ENCODE measurements at regions of chr9 and their contacts with region 1.

Region 1: GRCh38 chr9:136482793-136483588 is at the start of gene SEC16A:
- DNase-seq: peak; percentile 81
- ATAC-seq: peak; percentile 79
- H3K4me3 ChIP-seq: peak within 1 kb of the TSS; percentile 92
- H3K27ac ChIP-seq: peak within 1 kb of the TSS; percentile 99
- H3K4me1 ChIP-seq: peaks cover 6% of the 10 kb centered on the region; the same call in 1 of the 2 replicates
- H3K27me3 ChIP-seq: no peaks in the 10 kb centered on the region
- CTCF ChIP-seq: no peak
- EP300 ChIP-seq: no peak
- POLR2A ChIP-seq: peak; percentile 97
- RAD21 ChIP-seq: no peak
- polyA plus RNA-seq, gene SEC16A: 12.4 to 16.6 TPM

Region 2: DNA sequence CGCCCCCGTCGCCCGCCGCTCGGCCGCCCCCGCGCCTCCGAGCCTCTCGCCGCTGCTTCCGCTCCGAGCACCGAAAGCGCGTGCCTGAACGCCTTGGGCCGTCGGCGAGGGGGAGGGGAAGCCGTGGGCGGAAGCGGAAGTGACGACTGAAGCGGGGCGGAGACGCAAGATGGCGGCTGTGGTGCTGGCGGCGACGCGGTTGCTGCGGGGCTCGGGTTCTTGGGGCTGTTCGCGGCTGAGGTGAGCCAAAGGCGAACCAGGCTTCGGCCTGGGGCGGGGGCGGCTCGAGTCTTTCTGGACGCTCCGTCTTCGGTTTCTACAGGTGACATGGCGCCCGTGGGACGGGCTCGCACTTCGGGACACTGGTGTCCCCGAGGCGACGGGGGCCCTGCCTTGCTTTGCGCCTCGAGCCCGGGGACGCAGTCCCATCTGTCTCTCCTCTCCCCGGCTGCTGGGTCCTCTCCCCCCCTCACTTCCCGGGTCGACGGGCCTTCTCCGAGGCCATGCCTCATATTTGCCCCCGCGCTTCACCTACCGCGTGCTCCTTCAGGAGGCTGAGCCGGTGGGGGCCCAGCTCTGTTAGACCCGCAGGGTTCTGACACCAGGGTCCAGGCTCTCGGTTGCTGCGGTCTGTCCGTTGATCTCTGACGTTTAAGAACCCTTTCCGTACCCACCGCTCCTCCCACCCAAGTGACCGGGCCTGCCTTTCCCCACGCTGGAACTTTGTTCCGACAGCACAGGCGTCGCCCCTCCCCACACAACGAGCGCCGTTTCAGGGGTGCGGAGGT is 72.3 kb before region 1 on chr9 and contains the starts of genes ENTR1 and PMPCA:
- CTCF ChIA-PET with region 1: interaction called, 3 read pairs
- POLR2A ChIA-PET with region 1: no interaction called
- RAD21 ChIA-PET with region 1: no interaction called
- SMC1A ChIA-PET with region 1: no interaction called
- in situ Hi-C with region 1: no loop called
- intact Hi-C with region 1: loop called (anchors 2 kb)
- DNase-seq: peak; percentile 66
- ATAC-seq: peak; percentile 78
- H3K4me3 ChIP-seq: peak within 1 kb of the TSS; percentile 96
- H3K27ac ChIP-seq: peak within 1 kb of the TSS; percentile 93
- H3K4me1 ChIP-seq: peaks cover 16% of the 10 kb centered on the region
- H3K27me3 ChIP-seq: no peaks in the 10 kb centered on the region
- CTCF ChIP-seq: no peak
- EP300 ChIP-seq: no peak
- POLR2A ChIP-seq: peak; percentile 93
- RAD21 ChIP-seq: no peak
- polyA plus RNA-seq, gene ENTR1: 8.2 to 20.4 TPM
- polyA plus RNA-seq, gene PMPCA: 8.1 to 12.3 TPM

Region 3: GRCh38 chr9:136545966-136546698 is 63.1 kb after region 1 on chr9 and contains the start of gene NOTCH1:
- CTCF ChIA-PET with region 1: no interaction called
- POLR2A ChIA-PET with region 1: no interaction called
- RAD21 ChIA-PET with region 1: interaction called, 3 read pairs
- SMC1A ChIA-PET with region 1: no interaction called
- in situ Hi-C with region 1: no loop called
- intact Hi-C with region 1: loop called (anchors 5 kb)
- DNase-seq: peak; percentile 80
- ATAC-seq: peak; percentile 83
- H3K4me3 ChIP-seq: peak within 1 kb of the TSS; percentile 99
- H3K27ac ChIP-seq: peak within 1 kb of the TSS; percentile 83
- H3K4me1 ChIP-seq: peaks cover 37% of the 10 kb centered on the region
- H3K27me3 ChIP-seq: no peaks in the 10 kb centered on the region
- CTCF ChIP-seq: peak in 1 of 3 experiments; percentile 6; a peak in 1 of 6 replicates
- EP300 ChIP-seq: no peak
- POLR2A ChIP-seq: peak; percentile 80
- RAD21 ChIP-seq: no peak
- polyA plus RNA-seq, gene NOTCH1: 0.02 to 0.24 TPM

Region 4: GRCh38 chr9:136631038-136632000 is 148.3 kb after region 1 on chr9:
- CTCF ChIA-PET with region 1: interaction called, 223 read pairs
- POLR2A ChIA-PET with region 1: interaction called, 3 read pairs
- RAD21 ChIA-PET with region 1: interaction called, 126 read pairs
- SMC1A ChIA-PET with region 1: interaction called, 16 read pairs
- in situ Hi-C with region 1: no loop called
- intact Hi-C with region 1: loop called (anchors 1 kb)
- DNase-seq: peak; percentile 40
- ATAC-seq: peak; percentile 96
- H3K4me3 ChIP-seq: no peak overlapping the region
- H3K27ac ChIP-seq: no peak overlapping the region
- H3K4me1 ChIP-seq: no peaks in the 10 kb centered on the region; the same call in 1 of the 2 replicates
- H3K27me3 ChIP-seq: no peaks in the 10 kb centered on the region; a peak in 2 of 4 replicates
- CTCF ChIP-seq: peak; percentile 72 to 89 (median 88)
- EP300 ChIP-seq: no peak
- POLR2A ChIP-seq: no peak
- RAD21 ChIP-seq: peak; percentile 98

Region 5: DNA sequence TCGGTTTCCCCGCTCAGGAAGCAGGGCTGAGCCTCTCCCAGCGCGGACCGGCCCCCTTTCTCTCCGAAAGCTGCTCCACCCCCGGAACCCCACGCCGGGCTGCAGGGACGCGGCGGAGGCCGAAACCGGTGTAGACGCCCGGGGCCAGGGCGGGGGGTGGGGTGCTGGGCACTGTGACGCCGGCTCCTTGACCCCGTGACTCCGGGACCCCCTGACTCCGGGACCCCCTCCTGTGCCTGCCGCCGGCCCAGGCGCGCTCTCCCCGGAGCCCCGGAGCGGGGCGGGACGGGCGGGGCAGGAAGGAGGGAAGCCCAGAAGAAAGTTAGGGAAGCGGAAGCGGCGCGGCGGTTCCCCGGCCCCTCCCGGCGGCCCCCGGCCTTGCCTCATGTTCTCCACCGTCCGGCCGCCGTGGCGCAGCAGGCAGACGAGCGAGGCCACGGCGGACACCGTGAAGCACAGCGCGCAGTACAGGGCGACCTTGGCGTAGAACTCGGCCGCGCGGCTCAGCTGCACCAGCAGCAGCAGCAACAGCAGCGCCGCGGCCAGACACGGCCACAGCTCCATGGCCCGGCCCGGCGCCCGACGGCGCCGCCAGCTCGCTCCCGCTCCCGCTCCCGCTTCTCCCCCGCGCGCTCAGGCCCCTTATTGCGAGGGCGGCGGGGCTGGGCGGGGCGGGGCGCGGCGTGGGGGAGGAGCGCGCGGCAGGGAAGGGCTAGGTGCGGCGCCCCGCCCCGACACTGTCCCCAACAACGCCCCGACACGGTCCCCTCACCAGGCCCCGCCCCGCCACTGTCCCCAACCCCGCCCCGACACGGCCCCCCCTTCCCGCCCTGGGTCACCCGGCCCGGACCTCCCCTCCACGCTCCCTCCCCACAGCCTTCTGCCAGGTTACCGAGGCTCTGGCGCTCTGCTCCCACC is 204.1 kb after region 1 on chr9 and contains the start of gene AGPAT2:
- CTCF ChIA-PET with region 1: no interaction called
- POLR2A ChIA-PET with region 1: no interaction called
- RAD21 ChIA-PET with region 1: no interaction called
- SMC1A ChIA-PET with region 1: no interaction called
- in situ Hi-C with region 1: no loop called
- intact Hi-C with region 1: loop called (anchors 5 kb)
- DNase-seq: no peak
- ATAC-seq: peak; percentile 92
- H3K4me3 ChIP-seq: peak within 1 kb of the TSS; percentile 99
- H3K27ac ChIP-seq: peak within 1 kb of the TSS; percentile 55
- H3K4me1 ChIP-seq: peaks cover 16% of the 10 kb centered on the region
- H3K27me3 ChIP-seq: no peaks in the 10 kb centered on the region
- CTCF ChIP-seq: no peak
- EP300 ChIP-seq: no peak
- POLR2A ChIP-seq: peak; percentile 75
- RAD21 ChIP-seq: no peak
- polyA plus RNA-seq, gene AGPAT2: 0.10 to 0.47 TPM

Measured in GM12878 (cell line).